PC-3 (cell line): ENCODE measurements at regions of chr17 and their contacts with region 1.

Region 1: DNA sequence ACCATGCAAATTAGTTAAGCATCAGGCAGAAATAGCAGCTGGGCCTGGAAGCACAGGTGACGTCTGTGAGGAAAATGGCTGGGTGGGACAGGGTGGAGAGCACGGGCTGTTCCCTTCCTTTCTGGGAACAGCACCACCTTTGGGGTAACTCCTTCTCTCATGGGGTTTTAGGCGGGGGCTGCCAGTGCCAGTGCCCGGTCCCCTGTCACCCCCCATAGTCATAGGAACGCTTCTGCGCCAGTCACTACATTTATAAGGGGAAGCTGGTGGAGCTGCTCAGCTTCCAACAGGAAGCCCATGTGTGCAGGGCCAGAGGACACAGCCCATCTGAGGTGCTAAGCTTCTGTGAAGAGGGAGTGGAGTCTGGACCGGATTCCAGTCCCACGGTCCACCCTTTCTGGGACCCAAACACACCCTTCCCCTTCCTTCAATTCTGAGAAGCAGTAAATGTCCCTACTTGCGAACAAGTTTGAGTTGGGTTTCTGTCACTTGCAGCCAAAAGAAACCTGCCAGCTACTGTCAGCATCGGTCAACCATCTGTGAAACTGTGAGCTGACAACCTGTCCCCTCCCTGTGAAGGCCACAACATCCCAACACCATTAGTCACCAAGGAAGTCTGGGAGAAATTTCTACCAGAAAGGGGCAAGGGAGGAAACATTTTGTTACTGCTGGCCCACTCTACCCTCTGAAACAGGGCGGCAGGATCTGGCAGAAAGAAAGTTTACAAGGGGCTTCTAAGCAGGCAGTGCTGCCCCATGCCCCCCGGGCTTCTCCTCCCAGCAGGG is 86.0 kb upstream of the AMZ2 start:
- DNase-seq: peak; percentile 66
- ATAC-seq: peak; percentile 71
- H3K4me3 ChIP-seq: no peak overlapping the region
- H3K27ac ChIP-seq: no peak overlapping the region
- H3K4me1 ChIP-seq: peaks cover 7% of the 10 kb centered on the region
- H3K27me3 ChIP-seq: no peaks in the 10 kb centered on the region
- CTCF ChIP-seq: no peak

Region 2: DNA sequence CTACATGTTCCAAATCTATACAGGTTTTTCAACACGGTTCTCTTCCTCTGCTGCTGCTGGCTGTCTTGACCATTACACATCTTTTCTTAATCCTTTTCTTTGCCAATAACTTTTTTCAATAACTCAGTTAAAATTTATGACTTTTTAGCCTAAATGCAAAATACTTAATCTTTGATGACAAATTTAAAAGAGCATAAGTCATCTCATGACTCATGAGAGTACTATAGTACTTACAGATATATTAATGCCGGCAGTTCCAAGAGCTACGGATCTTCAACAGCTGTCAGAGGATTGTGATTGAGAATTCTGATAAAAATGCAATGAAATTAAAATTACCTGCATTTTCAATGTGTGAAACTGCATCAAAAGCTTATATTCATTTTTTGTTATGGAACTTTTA is 20.8 kb before region 1 on chr17:
- CTCF ChIA-PET with region 1: no interaction called
- POLR2A ChIA-PET with region 1: interaction called, 19 read pairs
- intact Hi-C with region 1: no loop called
- DNase-seq: peak; percentile 59
- ATAC-seq: peak; percentile 92
- H3K4me3 ChIP-seq: no peak overlapping the region
- H3K27ac ChIP-seq: no peak overlapping the region
- H3K4me1 ChIP-seq: peaks cover 9% of the 10 kb centered on the region
- H3K27me3 ChIP-seq: no peaks in the 10 kb centered on the region
- CTCF ChIP-seq: no peak

Region 3: DNA sequence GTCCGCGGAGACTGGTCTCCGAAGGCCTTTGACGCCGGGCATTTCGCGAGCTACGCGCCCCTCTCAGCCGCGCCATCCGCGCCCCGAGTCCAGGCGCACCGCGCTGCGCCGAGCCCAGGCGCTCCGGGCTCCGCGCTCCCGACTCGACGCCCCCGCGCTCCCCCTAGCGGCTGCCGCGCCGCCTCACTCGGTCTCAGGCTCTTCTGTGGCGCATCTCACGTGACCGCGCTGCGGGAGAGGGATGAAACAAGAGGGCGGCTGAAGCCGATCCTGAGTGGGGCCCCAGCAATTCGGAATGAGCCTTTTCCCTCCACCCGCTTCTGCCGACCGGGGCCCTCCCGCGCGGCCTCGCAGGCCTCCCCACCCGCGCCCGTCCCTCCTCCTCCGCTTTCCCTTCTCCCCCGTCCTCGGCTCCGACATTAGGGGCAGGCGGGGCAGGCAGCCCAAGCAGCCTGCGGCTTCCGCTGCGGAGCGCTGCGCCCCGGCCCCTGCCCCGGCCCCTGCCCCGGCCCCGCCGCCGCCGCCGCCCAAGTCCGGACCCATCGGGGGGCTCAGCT is 43.5 kb after region 1 on chr17:
- CTCF ChIA-PET with region 1: no interaction called
- POLR2A ChIA-PET with region 1: no interaction called
- intact Hi-C with region 1: no loop called
- DNase-seq: peak; percentile 91
- ATAC-seq: peak; percentile 83
- H3K4me3 ChIP-seq: peak overlapping the region; percentile 94
- H3K27ac ChIP-seq: no peak overlapping the region
- H3K4me1 ChIP-seq: peaks cover 14% of the 10 kb centered on the region
- H3K27me3 ChIP-seq: peaks cover 2% of the 10 kb centered on the region
- CTCF ChIP-seq: peak; percentile 91

Region 4: DNA sequence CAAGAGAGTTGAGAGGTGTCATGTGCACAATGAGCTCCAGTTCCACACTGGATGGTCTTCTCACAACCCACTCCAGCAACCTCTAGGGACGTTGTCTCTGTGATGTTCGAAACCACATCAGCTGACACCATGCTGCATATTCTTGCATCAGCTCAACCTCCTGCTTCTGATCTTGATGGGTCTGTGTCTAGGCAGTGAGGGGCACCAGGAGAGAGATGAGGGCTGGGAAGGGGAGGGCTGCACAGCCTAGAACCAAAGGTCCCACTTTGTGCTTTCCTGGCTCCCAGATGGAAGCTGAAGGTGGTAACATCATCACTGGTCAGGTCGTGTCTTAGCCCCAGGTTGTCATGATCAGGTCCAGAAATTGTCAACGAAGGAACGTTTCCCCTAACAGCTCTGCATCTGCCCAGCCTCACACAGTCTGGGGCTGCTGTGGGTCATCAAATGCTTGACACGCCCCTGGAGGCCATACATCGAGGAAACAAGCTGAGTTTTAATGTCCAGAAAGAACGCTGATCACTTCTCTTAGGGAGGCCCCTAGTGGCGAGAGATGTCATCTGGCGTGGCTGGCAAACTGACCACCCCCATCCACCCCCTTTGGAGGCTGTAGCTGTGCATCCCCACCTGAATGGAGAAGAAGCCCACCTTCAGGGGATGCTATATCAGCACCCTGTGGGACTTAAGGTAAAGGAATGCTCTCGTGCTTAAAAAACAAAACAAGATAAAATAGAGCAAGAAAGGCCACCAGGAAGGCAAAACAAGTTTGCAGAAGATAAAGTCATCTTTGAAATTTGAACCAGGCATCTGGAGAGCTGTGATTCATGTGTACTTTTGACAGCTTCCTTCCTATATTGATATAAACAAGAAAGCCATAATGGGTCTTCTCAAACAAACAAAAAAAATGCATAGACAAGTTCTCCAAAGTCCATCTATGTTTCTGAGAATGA is 237.1 kb after region 1 on chr17:
- CTCF ChIA-PET with region 1: interaction called, 15 read pairs
- POLR2A ChIA-PET with region 1: no interaction called
- intact Hi-C with region 1: no loop called
- DNase-seq: peak; percentile 89
- ATAC-seq: peak; percentile 98
- H3K4me3 ChIP-seq: no peak overlapping the region
- H3K27ac ChIP-seq: peak overlapping the region; percentile 6; the same call in 1 of the 2 replicates
- H3K4me1 ChIP-seq: peaks cover 5% of the 10 kb centered on the region; the same call in 1 of the 2 replicates
- H3K27me3 ChIP-seq: no peaks in the 10 kb centered on the region
- CTCF ChIP-seq: peak; percentile 99